ENCODE measurements at regions of chr14 and their contacts with region 1.

Region 1: GRCh38 chr14:64294672-64295413 is 672 bp upstream of the ESR2 start:
- DNase-seq: peak; percentile 91
- H3K4me3 Mint-ChIP-seq: peak overlapping the region; percentile 68
- H3K27ac Mint-ChIP-seq: no peak overlapping the region
- H3K4me1 Mint-ChIP-seq: peaks cover 39% of the 10 kb centered on the region
- H3K27me3 Mint-ChIP-seq: peaks cover 18% of the 10 kb centered on the region

Region 2: DNA sequence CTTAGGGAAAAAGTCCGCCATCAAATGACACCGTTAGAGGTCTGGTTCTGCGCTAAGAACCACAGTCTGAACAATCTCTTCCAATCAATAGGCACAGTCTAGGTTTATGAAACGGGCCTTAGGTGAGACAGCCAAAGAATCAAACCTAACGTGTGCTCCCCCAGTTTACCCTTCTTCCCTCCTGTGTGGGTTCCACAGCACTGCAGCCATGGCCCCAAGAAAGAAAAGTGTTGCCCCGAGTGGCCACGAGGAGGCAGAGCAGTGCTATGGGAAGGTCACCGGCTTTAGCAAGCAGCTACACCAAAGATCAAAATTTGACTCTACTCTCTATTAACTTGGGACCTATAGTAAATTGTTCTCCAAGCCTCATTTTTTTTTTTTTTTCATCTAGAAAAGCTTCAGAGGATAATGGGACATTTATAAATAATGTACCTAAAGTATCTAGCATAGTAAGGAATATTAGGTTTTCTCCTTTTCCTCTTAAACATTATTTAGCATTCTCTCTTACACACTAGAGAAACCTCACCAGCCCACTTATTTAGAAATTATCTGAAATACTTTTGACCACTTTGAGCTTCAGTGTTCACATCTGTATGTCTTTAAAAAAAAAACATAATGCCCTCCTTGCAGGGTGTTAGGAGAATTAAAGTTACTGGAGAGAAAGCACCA is 905.9 kb before region 1 on chr14:
- CTCF ChIA-PET with region 1: no interaction called
- intact Hi-C with region 1: loop called (anchors 5 kb)
- DNase-seq: peak; percentile 76
- H3K4me3 Mint-ChIP-seq: no peak overlapping the region
- H3K27ac Mint-ChIP-seq: no peak overlapping the region
- H3K4me1 Mint-ChIP-seq: no peaks in the 10 kb centered on the region
- H3K27me3 Mint-ChIP-seq: no peaks in the 10 kb centered on the region

Region 3: DNA sequence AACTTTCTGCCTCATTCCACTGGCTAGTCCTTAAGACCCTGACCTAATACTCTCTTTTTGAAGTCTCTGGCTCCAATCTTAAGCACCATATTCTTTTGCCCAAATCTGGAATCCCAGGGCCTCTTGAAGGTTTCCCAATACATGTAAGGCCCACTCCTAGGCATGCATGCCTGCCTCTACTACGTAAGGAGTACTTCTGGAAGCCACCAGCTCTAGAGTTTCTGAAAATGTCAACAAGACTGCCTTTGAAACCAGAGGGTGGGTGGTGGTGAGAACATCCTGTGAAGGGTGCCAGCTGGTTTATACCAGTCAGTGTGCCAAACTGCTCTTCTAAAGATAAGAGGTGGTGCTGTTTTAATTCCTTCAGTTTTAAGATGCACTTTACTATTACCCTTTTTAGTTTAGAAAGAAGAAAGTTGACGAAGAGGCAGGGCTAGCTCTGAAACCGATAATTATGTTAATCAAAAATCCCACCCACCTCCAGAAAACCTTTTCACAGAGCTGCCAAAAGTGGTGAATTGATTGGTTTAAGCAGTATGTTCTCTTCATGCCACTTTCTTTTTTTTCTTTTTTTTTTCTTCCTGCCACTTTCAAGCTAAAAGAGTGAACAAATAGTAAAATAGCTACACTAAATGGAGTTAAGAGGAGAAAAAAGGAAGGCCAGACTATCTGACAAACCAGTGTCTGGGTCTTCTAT is 644.4 kb before region 1 on chr14:
- CTCF ChIA-PET with region 1: no interaction called
- intact Hi-C with region 1: loop called (anchors 5 kb)
- DNase-seq: peak; percentile 76
- H3K4me3 Mint-ChIP-seq: peak overlapping the region; percentile 34
- H3K27ac Mint-ChIP-seq: peak overlapping the region; percentile 97
- H3K4me1 Mint-ChIP-seq: peaks cover 50% of the 10 kb centered on the region
- H3K27me3 Mint-ChIP-seq: no peaks in the 10 kb centered on the region

Region 4: DNA sequence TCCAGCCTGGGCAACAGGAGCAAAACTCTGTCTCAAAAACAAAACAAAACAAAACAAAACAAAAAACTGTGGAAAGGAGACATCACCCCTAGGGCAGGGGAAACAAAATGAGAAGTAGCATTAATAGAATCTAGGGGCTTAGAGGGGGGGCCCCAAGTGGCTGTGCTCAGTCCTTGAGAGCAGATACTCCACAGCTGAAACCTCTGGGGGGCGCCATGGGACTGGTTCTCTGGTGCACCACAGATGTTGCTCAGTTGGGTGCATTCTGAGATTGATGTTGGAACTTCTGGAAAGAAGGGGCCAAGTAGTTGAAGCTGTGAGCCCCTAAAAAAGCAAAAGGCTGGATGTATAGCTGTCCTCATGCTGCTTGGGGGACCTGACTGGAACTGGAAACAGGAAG is 453.9 kb before region 1 on chr14:
- CTCF ChIA-PET with region 1: no interaction called
- intact Hi-C with region 1: loop called (anchors 1 kb)
- DNase-seq: peak; percentile 74
- H3K4me3 Mint-ChIP-seq: no peak overlapping the region
- H3K27ac Mint-ChIP-seq: no peak overlapping the region
- H3K4me1 Mint-ChIP-seq: no peaks in the 10 kb centered on the region
- H3K27me3 Mint-ChIP-seq: no peaks in the 10 kb centered on the region

Region 5: DNA sequence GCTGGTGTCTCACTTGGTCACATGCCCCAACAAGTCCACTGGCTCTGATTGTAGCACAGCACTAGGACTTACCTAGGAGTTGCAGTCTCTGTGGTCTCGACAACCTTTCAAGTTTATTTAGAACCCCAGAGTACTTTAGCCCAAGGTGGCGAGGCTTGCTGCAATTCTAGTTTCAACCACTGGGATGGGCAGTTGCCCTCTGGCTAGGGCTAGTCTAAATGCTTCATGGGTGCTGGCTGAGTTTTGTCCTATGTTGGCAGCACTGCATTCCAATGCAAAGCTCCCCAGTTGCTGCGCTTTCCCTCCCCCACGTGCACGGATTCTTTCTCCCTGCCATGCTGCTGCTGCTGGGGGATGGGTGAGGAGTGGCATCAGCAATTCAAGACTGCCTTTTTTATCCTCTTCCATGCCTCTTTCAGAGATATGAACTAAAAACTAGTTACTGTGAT is 234.2 kb before region 1 on chr14:
- CTCF ChIA-PET with region 1: interaction called, 5 read pairs
- intact Hi-C with region 1: loop called (anchors 1 kb)
- DNase-seq: peak; percentile 28
- H3K4me3 Mint-ChIP-seq: no peak overlapping the region
- H3K27ac Mint-ChIP-seq: no peak overlapping the region
- H3K4me1 Mint-ChIP-seq: no peaks in the 10 kb centered on the region
- H3K27me3 Mint-ChIP-seq: no peaks in the 10 kb centered on the region

Region 6: DNA sequence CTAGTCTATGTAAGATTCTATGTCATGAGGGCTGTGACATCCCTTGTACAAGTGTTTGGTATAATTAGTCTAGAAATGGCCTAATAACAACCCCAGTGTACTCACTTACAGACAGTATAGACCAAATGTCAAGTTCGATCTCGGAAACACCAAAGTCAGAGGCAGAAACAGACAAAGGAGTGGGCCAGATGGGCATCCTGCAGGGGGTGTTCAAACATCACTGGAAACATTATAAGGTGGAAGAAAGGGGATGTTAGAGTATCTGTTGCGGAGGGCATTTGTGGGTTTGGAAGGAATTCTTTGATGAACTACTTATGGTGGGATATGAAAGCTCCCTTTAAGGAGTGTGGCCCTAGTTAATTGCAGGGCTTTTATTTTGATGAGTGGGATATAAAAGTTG is 135.3 kb before region 1 on chr14:
- CTCF ChIA-PET with region 1: no interaction called
- intact Hi-C with region 1: loop called (anchors 1 kb)
- DNase-seq: no peak
- H3K4me3 Mint-ChIP-seq: no peak overlapping the region
- H3K27ac Mint-ChIP-seq: no peak overlapping the region
- H3K4me1 Mint-ChIP-seq: no peaks in the 10 kb centered on the region
- H3K27me3 Mint-ChIP-seq: no peaks in the 10 kb centered on the region

Region 7: DNA sequence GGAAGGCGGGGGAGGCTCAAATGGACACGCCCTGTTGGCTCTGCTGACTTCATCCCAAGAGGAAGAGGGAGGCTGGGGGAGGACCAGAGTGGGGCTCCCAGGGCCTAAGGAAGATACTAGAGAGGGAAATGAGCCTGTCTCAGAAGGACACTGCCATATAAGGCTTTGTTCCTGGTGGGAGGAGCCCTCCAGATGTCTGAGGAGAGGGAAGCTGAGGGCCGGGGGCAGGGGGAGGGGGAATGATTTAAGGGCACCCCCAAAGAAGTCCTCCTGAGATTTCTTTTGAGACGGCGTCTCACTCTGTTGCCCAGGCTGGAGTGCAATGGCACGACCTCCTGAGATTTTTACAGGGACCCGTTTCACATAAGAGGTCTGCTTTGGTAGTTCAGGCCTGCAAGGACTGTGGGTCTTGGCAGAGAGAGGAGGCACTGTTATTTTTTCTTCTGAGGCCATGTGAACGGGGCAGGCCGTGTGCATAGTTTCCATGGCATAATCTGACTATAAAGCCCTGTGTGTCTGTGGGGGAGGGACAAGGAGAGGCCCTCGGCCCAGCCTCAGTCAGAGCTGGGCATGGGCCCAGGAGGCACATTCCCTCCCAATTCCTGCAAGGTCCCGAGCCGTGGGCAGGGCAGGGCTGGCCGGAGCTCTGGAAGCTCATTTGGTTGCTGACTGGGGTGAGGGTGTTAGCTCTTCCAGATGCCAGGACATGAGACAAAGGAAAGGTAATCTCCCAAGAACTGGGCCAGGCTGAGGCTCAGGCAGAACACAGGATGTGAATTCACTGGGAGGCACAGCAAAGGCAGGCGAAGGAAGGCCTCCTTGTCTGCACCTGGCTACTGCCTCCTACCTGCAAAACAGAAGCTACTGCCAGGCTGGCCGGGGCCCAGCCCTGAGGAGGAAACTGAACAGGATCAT is 387.2 kb after region 1 on chr14:
- CTCF ChIA-PET with region 1: no interaction called
- intact Hi-C with region 1: no loop called
- DNase-seq: no peak
- H3K4me3 Mint-ChIP-seq: no peak overlapping the region
- H3K27ac Mint-ChIP-seq: no peak overlapping the region
- H3K4me1 Mint-ChIP-seq: no peaks in the 10 kb centered on the region
- H3K27me3 Mint-ChIP-seq: no peaks in the 10 kb centered on the region

Measured in activated naive CD4-positive, alpha-beta T cell treated with anti-CD3 and anti-CD28 coated beads for 36 hours (primary cell).